ENCODE measurements at regions of chrX and their contacts with region 1.

Region 1: DNA sequence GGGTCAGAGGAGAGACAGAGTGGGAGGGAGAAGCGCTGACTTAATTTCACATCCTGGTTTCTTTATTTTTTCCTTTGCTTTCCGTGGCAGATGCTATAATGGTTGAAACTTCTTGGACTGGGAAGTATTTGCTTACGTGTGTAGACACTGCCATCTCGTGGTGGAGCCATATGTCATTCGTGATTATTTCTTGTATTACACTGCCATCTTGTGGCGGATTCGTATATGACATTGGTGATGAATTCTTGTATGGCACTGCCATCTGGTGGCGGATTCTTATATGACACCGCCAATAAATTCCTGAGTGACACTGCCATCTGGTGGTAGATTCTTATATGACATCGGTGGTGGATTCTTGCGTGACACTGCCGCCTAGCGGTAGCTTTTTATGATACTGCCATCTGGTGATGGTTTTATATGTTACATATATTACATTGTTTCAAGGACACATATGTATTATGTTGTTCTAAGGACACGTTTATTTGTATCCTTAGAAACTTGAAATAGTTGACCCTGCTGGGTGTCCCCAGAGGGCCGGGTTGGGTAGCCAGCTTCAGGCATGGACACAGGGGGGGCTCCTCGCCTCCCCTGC is 37.3 kb upstream of the CLCN4 start:
- DNase-seq: peak; percentile 27
- ATAC-seq: no peak; the same call in 1 of the 2 replicates
- H3K4me3 Mint-ChIP-seq: no peak overlapping the region
- H3K27ac Mint-ChIP-seq: no peak overlapping the region
- H3K4me1 Mint-ChIP-seq: no peaks in the 10 kb centered on the region
- H3K27me3 Mint-ChIP-seq: no peaks in the 10 kb centered on the region
- CTCF ChIP-seq: peak; percentile 99

Region 2: DNA sequence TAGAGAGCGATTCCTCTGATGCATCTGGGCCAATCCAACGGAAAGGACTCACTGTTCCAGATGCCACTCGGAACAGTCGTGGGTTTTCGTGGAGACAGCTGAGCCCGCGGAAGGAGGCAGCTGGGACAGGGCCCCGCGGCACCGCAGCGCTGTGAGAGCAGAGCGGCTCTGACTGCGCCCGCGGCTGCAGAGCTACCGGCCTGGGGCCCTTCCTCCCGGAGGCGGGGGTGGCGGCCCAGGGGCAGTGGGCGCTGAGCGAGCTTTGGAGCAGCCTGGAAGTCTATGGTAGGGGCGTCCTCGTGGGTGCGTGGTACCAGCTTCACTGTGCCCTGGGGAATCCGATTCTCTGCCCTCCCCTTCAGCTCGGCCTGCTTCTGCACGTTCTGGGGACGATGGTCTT is 127.4 kb before region 1 on chrX:
- CTCF ChIA-PET with region 1: interaction called, 11 read pairs
- POLR2A ChIA-PET with region 1: no interaction called
- DNase-seq: no peak
- ATAC-seq: no peak
- H3K4me3 Mint-ChIP-seq: no peak overlapping the region
- H3K27ac Mint-ChIP-seq: no peak overlapping the region
- H3K4me1 Mint-ChIP-seq: peaks cover 2% of the 10 kb centered on the region; the same call in 1 of the 2 replicates
- H3K27me3 Mint-ChIP-seq: no peaks in the 10 kb centered on the region
- CTCF ChIP-seq: no peak

Region 3: DNA sequence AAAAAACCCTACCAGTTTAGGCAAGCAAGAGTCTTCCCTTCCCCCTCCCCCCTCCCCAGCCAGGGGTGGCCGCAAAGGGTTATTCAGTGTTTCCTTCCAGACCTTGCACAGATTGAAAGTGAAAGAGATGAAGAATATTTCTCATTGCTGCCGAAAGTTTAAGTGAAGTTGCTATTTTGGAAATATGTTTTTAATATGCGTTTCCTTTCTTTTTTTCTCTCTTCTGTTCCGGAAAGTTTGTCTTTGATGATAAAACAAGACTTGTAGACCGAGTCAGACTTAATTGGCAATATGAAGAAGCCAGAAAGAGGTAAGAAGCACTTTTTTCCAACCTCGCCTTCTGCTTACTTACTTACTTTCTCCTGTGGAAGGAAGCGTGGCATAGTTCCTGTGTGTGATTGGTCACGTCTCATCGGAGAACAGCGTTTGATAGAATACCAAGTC is 21.2 kb before region 1 on chrX:
- CTCF ChIA-PET with region 1: no interaction called
- POLR2A ChIA-PET with region 1: no interaction called
- DNase-seq: no peak
- ATAC-seq: no peak
- H3K4me3 Mint-ChIP-seq: no peak overlapping the region
- H3K27ac Mint-ChIP-seq: no peak overlapping the region
- H3K4me1 Mint-ChIP-seq: peaks cover 2% of the 10 kb centered on the region; the same call in 1 of the 2 replicates
- H3K27me3 Mint-ChIP-seq: no peaks in the 10 kb centered on the region
- CTCF ChIP-seq: no peak

Measured in WTC11 (cell line).